ENCODE measurements at regions of chr2 and their contacts with region 1.

Region 1: GRCh38 chr2:11753886-11754699 is 7.7 kb downstream of the LPIN1 start:
- DNase-seq: peak; percentile 87
- H3K4me3 Mint-ChIP-seq: peak overlapping the region; percentile 72
- H3K27ac Mint-ChIP-seq: peak overlapping the region; percentile 97
- H3K4me1 Mint-ChIP-seq: peaks cover 90% of the 10 kb centered on the region
- H3K27me3 Mint-ChIP-seq: no peaks in the 10 kb centered on the region

Region 2: DNA sequence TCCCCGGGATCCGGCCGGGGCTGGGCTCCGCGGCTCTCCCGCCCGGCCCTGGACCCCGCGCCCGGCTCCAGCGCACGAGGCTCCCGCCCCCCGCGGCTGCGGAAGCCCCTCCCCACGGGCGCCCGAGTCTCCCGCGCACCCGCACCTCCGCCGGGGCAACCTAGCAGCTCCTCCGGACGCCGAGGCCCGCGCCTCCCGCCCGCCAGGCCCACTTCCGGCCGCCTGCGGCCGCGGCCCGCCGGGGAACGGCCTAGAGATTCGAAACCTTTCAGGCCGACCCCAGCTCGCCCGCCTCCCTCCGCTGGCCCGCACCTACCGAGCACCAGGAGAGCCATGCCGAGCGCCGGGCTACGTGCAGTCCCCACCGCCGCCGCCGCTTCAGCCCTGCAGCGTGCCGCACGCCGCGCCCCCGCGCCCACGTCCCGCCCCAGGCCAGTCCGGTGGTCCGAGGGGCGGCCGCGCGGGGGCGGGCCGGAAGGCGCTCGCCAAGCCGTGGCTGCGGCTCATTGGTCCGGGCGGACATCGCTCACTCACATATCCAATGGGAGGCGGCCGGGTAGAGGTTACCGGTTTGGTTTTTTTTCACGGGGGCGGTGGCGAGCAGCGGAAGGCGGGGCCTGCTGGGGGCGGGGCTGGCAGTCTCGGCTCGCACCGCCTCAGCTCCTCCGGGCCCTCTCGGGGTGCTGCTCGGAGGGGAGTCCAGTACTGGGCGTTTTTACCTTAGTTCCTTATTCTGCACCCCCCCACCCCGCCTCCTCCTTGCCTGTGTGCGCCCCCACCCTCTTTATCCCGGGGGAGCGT is 941.5 kb before region 1 on chr2 and contains the start of gene PDIA6:
- CTCF ChIA-PET with region 1: no interaction called
- POLR2A ChIA-PET with region 1: no interaction called
- intact Hi-C with region 1: loop called (anchors 5 kb)
- DNase-seq: peak; percentile 97
- H3K4me3 Mint-ChIP-seq: peak within 1 kb of the TSS; percentile 88
- H3K27ac Mint-ChIP-seq: peak within 1 kb of the TSS; percentile 90
- H3K4me1 Mint-ChIP-seq: peaks cover 34% of the 10 kb centered on the region
- H3K27me3 Mint-ChIP-seq: no peaks in the 10 kb centered on the region
- total RNA-seq, gene PDIA6: 176 to 181 TPM

Region 3: DNA sequence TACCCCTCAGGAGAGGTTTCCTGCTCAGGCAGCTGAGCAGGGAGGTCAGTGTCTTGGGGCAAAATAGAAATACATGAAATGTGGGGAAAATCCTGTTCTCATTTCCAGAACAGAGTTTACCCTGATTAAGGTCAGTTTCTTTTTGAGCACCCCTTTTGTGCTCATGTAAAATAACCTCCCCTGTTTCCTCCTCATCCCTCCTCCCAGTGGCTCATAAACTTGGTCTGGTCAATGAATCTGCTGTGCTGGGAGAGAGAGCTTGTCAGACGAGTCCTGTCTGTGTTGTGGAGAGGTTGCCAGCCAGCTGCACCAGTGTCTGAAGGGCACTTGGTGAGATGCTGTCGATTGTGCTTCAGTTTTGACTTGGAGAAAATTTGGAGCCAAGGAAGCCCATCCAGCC is 132.7 kb before region 1 on chr2:
- CTCF ChIA-PET with region 1: no interaction called
- POLR2A ChIA-PET with region 1: no interaction called
- intact Hi-C with region 1: no loop called
- DNase-seq: no peak
- H3K4me3 Mint-ChIP-seq: no peak overlapping the region
- H3K27ac Mint-ChIP-seq: no peak overlapping the region
- H3K4me1 Mint-ChIP-seq: no peaks in the 10 kb centered on the region
- H3K27me3 Mint-ChIP-seq: peaks cover 1% of the 10 kb centered on the region

Region 4: GRCh38 chr2:11710234-11710975 is 43.7 kb before region 1 on chr2:
- CTCF ChIA-PET with region 1: no interaction called
- POLR2A ChIA-PET with region 1: no interaction called
- intact Hi-C with region 1: no loop called
- DNase-seq: no peak
- H3K4me3 Mint-ChIP-seq: no peak overlapping the region
- H3K27ac Mint-ChIP-seq: no peak overlapping the region
- H3K4me1 Mint-ChIP-seq: no peaks in the 10 kb centered on the region
- H3K27me3 Mint-ChIP-seq: no peaks in the 10 kb centered on the region

Region 5: DNA sequence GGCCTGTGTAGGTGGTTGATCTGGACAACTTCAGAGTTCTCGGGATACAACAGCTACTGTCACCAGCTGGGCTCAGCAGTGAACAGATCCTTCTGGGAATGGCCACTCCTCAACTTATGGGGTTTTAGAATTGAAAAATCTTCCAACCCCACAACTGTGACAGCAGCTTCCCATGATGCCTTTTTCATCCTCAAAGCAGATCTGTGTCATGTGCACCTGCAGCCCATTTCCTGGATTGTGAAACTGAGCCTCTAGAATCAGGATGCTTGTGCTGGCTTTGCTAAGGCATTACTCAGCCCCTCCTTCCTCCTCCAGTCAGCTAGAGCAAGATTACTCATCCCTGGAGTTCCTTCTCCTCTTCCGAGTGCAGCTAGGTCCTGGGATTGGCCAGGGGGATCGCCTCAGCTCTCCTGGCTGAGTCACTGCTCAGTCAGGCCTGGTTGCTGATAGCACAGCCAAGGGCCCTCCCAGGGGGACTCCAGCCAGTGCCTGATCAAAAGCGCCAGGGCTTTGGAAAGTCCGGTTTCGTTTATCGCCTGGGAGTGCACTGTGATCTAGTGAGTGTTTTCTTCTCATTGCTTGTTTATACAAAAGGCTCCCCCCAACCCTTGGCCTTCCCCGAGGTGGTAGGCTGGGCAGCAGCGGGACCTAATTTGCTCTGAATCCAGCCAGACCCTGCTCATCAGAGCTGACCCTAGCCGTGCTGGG is 10.1 kb before region 1 on chr2:
- CTCF ChIA-PET with region 1: interaction called, 25 read pairs
- POLR2A ChIA-PET with region 1: interaction called, 25 read pairs
- intact Hi-C with region 1: loop called (anchors 1 kb)
- DNase-seq: peak; percentile 93
- H3K4me3 Mint-ChIP-seq: peak overlapping the region; percentile 48
- H3K27ac Mint-ChIP-seq: peak overlapping the region; percentile 77
- H3K4me1 Mint-ChIP-seq: peaks cover 54% of the 10 kb centered on the region
- H3K27me3 Mint-ChIP-seq: no peaks in the 10 kb centered on the region